HEK293 (cell line): ENCODE measurements at regions of chr15 and their contacts with region 1.

Region 1: DNA sequence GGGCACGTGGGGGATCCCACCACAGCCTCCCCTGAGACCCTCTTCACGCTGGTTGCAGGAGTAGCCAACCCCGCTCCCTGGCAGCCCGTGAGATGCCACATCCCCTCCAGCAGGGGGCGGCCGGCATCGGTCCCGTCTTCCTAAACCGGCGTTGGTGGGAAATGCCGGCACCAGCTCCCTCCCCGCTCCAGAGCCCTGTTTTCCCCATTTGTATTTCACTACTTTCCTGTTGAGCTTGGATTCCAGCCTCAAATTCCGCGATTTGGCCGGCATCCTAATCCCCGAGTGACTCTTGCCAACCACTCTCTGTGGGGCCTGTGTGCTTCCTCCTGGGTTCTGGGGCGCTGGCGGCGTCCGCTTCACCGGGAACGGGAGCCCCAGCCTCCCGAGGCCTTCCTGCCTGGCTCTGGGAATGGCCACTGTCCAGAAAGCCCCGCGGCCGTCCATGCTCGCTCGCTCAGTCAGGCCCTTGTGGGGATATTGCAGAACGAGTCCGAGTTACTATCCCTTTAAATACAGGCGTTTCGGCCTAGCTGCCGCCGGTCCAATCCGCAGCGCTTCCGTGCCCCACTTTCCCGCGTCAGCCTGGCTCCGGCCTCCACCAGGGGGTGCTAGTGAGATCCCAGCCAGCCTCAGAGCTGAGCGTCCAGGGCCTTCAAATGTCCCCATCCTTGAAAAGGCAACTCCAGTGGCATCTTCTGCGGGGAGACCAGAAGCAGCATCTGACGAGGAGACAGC is 8.1 kb upstream of the ADAMTS17 start:
- H3K4me3 ChIP-seq: peak overlapping the region; percentile 63
- H3K27ac ChIP-seq: peak overlapping the region; percentile 84; the same call in 1 of the 2 replicates
- H3K4me1 ChIP-seq: no peaks in the 10 kb centered on the region
- CTCF ChIP-seq: peak; percentile 60

Region 2: GRCh38 chr15:100330629-100331215 is 19.1 kb before region 1 on chr15:
- CTCF ChIA-PET with region 1: interaction called, 14 read pairs
- POLR2A ChIA-PET with region 1: no interaction called
- H3K4me3 ChIP-seq: no peak overlapping the region
- H3K27ac ChIP-seq: no peak overlapping the region
- H3K4me1 ChIP-seq: no peaks in the 10 kb centered on the region
- CTCF ChIP-seq: no peak

Region 3: GRCh38 chr15:100383302-100384107 is 33.6 kb after region 1 on chr15:
- CTCF ChIA-PET with region 1: interaction called, 30 read pairs
- POLR2A ChIA-PET with region 1: no interaction called
- H3K4me3 ChIP-seq: no peak overlapping the region
- H3K27ac ChIP-seq: no peak overlapping the region
- H3K4me1 ChIP-seq: no peaks in the 10 kb centered on the region
- CTCF ChIP-seq: peak; percentile 42; the same call in 1 of the 2 replicates

Region 4: DNA sequence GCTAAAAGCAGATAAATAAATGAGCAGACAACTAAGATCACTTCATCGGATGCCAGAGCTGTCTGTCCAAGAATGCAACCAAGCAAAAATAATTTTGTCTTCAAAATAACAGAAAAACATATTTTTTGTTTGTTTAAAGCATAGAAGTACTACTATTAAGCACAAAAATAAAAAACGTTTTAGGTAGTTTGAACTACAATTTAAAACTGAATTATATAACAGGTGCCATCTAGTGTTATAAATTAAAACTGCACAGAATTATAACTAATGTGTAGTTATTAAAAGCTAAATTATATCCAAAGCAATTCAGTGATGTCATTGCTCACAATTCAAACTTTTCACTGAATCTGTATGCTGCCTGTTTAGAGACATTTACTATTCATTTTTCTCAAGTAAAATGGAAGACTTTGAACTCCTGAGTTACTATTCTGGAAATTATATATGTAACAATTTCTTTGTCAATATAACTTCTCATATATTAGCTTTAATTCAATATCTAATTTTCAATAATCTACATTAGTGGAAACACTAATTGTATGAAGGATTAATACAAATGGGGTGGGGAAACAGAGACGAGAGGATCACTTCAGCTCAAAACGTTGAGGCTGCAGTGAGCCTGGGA is 222.6 kb after region 1 on chr15:
- CTCF ChIA-PET with region 1: interaction called, 34 read pairs
- POLR2A ChIA-PET with region 1: no interaction called
- H3K4me3 ChIP-seq: no peak overlapping the region
- H3K27ac ChIP-seq: no peak overlapping the region
- H3K4me1 ChIP-seq: no peaks in the 10 kb centered on the region
- CTCF ChIP-seq: no peak

Region 5: DNA sequence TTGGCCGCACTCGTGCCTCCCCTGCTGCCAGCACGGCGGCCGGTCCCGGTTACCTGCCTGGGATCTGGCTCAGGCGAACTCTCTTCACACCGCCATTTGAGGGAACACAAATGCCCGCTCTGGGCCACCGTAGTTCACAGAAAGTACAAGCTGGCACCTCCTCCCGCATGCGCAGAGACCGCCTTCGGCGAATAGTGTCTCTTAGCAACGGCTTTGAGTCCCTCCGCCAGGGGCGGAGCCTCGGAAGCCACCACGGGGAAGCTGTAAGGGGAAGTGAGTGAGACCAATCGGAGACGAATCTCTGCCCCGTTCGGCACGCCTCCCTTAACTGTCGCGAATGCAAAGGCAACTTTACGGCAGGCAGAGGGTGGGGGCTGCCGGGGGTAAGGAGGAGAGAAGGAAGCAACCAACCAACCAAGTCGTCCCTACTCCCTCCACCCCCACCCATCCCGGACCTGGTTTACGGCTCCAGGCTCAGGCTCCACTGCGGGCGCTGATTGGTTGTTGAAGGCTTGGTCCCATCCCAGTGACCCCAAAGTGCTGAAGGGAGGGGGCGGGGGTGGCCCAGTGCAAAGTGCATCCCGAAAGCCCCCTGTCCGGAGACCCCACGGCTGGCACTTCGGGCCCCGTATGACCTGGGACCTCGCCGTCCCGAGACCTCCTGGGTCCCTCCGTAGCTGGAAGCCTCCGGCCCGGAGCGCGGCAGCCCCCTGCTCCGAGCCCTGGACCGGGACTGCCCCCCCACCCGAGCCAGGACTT is 252.4 kb after region 1 on chr15 and contains the starts of genes ASB7 and LINS1:
- CTCF ChIA-PET with region 1: interaction called, 15 read pairs
- POLR2A ChIA-PET with region 1: interaction called, 4 read pairs
- H3K4me3 ChIP-seq: peak within 1 kb of the TSS; percentile 91
- H3K27ac ChIP-seq: peak within 1 kb of the TSS; percentile 62
- H3K4me1 ChIP-seq: peaks cover 14% of the 10 kb centered on the region
- CTCF ChIP-seq: no peak